ENCODE measurements at regions of chr1 and their contacts with region 1.

Region 1: GRCh38 chr1:27365372-27366112 is 1.2 kb downstream of the MAP3K6 start:
- DNase-seq: peak; percentile 93
- ATAC-seq: peak; percentile 76

Region 2: DNA sequence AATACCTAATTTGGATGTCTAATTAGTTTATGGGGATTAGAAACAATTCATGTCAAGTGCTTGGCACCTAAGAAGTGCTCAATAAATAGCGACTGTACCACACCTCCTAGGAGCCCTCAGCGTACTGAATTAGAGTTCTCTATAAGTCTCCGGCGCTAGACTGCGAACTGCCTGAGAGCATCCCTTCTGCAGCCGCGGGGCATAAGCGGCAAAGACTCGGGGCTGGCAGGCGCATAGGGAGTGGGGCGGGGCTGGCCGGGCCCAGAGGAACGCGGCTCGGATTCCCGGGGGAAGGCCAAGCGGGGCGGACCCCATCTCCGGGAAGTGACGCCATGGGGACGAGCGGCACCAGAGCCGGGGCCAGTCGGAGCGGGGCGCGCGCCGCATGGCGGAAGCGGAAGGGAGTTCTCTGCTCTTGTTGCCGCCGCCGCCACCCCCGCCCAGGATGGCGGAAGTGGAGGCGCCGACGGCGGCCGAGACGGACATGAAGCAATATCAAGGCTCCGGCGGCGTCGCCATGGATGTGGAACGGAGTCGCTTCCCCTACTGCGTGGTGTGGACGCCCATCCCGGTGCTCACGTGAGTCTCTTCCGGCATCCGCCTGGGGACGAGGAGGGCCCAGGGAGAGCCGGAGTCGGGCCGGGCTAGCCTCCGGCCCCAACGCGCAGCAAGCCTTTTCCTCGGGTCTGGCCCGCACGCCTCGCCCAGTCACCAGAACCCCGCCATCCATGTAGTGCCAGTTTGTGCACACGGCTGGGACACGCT is 43.5 kb before region 1 on chr1 and contains the start of gene TMEM222:
- intact Hi-C with region 1: loop called (anchors 5 kb)
- DNase-seq: peak; percentile 99
- ATAC-seq: peak; percentile 98
- total RNA-seq, gene TMEM222: 17.9 TPM

Measured in Right ventricle myocardium inferior (tissue), 1 donor.